CD4-positive, alpha-beta memory T cell (primary cell): ENCODE measurements at regions of chr2 and their contacts with region 1.

Region 1: DNA sequence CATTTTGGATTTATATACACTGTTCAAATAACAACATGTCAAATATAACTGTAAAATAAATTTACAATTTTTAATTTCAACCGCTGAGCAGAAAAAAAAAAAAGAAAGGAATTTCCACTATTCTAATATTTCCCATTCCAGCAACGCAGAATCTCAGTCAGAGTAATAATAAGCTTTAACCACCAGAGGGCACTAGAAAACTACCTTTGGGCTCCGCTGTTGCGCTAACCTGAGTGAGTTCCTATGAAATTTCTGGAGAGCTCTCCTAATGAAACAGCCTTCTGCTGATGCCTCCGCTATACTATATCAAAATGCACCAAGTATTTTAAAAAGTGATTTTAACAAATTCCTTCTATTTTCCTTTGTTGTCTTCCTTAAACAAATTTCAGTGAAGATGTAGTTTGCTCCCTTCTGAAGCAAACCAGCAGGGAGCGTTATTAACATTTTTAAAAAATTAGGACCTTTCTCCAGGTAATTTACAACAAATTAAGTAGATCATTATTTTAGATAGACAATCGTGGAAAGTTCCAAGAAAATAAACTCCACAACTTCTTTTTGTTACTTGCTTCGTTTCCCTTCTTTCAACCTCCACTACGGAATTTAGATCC is 23.0 kb downstream of the ERMN start:
- DNase-seq: peak in 4 of 5 donors; percentile 56 to 63 (median 60)
- H3K4me3 ChIP-seq: no peak overlapping the region
- H3K4me3 Mint-ChIP-seq: no peak overlapping the region
- H3K27ac ChIP-seq: no peak overlapping the region
- H3K27ac Mint-ChIP-seq: no peak overlapping the region
- H3K4me1 ChIP-seq: no peaks in the 10 kb centered on the region
- H3K4me1 Mint-ChIP-seq: peaks cover 0 to 6% (median 2%) of the 10 kb centered on the region in 4 donors
- H3K27me3 ChIP-seq: no peaks in the 10 kb centered on the region
- H3K27me3 Mint-ChIP-seq: peaks cover 1 to 3% of the 10 kb centered on the region in 2 donors

Region 2: GRCh38 chr2:157287160-157287559 is 15.4 kb before region 1 on chr2:
- CTCF ChIA-PET with region 1: interaction called, 21 read pairs
- POLR2A ChIA-PET with region 1: no interaction called
- intact Hi-C with region 1: no loop called
- DNase-seq: no peak
- H3K4me3 ChIP-seq: no peak overlapping the region
- H3K4me3 Mint-ChIP-seq: no peak overlapping the region
- H3K27ac ChIP-seq: no peak overlapping the region
- H3K27ac Mint-ChIP-seq: no peak overlapping the region
- H3K4me1 ChIP-seq: no peaks in the 10 kb centered on the region
- H3K4me1 Mint-ChIP-seq: no peaks in the 10 kb centered on the region
- H3K27me3 ChIP-seq: no peaks in the 10 kb centered on the region
- H3K27me3 Mint-ChIP-seq: peaks cover 3 to 6% of the 10 kb centered on the region in 2 donors

Region 3: DNA sequence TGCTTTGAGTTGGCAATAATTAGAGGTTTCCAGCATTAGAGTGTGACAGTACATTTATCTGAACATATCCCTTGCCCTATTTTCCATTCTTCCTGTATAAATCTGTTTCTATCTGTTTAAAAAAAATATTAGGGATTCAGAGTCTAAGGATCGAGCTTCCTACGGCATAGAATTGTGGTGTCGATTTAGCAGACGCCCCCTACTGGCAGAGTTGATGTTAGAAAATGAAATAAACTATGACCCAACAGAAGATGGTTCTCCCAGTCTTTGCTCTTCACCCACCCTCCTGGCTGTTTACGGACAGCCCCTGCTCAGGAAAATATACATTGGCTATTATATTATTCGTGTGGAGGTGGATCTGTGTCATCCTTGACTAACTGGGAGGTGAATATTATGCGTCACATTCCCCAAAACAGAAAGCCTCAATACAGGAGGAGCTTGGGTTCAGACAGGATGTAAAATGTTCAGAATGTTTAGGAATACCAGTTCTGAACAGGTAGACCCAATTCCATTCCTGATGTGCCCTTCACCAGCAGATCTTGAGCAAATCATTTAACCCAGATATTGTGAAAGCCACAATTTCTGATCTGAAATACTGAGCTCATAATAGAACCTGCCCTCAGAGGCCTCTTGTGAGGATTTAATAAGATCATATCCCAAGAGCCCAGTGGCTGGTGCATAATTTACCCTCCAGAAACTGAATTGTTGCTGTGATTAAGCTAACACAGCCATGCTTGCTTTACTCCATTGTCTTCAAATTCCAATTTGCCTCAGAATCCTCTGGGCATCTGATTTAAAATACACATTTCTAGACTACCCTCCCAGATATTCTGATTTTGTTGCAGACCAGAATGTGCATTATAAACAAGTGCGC is 33.8 kb after region 1 on chr2:
- CTCF ChIA-PET with region 1: interaction called, 136 read pairs
- POLR2A ChIA-PET with region 1: interaction called, 3 read pairs
- intact Hi-C with region 1: no loop called
- DNase-seq: peak in 4 of 5 donors; percentile 40 to 53 (median 48)
- H3K4me3 ChIP-seq: no peak overlapping the region
- H3K4me3 Mint-ChIP-seq: peak overlapping the region; percentile 61 to 83 (median 75)
- H3K27ac ChIP-seq: no peak overlapping the region
- H3K27ac Mint-ChIP-seq: peak overlapping the region; percentile 19 to 87 (median 45)
- H3K4me1 ChIP-seq: peaks cover 43% of the 10 kb centered on the region
- H3K4me1 Mint-ChIP-seq: peaks cover 45 to 60% (median 51%) of the 10 kb centered on the region in 4 donors
- H3K27me3 ChIP-seq: no peaks in the 10 kb centered on the region
- H3K27me3 Mint-ChIP-seq: no peaks in the 10 kb centered on the region

Region 4: GRCh38 chr2:157596992-157597681 is 294.5 kb after region 1 on chr2:
- CTCF ChIA-PET with region 1: interaction called, 142 read pairs
- POLR2A ChIA-PET with region 1: no interaction called
- intact Hi-C with region 1: loop called (anchors 1 kb)
- DNase-seq: peak; percentile 35 to 50 (median 40)
- H3K4me3 ChIP-seq: no peak overlapping the region
- H3K4me3 Mint-ChIP-seq: peak overlapping the region; percentile 44 to 75 (median 56)
- H3K27ac ChIP-seq: no peak overlapping the region
- H3K27ac Mint-ChIP-seq: no peak overlapping the region
- H3K4me1 ChIP-seq: no peaks in the 10 kb centered on the region
- H3K4me1 Mint-ChIP-seq: peaks cover 4 to 10% (median 6%) of the 10 kb centered on the region in 4 donors
- H3K27me3 ChIP-seq: no peaks in the 10 kb centered on the region
- H3K27me3 Mint-ChIP-seq: peaks cover 3 to 4% of the 10 kb centered on the region in 2 donors

Region 5: DNA sequence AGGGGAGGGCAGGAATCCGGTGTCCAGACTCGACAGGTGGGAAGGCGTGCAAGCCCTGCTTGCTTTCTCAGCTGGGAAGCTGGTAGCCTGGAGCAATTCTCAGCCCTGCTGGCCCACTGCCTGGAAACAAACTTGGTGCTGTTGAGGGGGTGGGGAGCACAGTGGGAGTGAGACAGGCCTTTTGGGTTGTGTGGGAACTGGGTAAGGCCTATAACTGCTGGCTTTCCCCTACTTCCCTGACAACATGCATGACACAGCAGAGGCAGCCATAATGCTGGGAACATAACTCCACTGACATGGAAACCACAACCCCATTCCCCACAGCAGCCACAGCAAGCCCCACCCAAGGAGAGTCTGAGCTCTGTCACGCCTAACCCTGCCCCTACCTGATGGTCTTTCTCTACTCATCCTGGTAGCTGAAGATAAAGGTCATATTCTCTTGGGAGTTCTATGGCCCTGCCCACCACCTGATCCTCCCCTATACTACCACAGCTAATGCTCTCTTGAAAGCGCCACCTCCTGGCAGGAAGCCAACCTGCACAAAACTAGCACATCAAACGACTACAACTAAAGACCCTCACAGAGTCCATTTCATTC is 449.0 kb after region 1 on chr2:
- CTCF ChIA-PET with region 1: interaction called, 15 read pairs
- POLR2A ChIA-PET with region 1: no interaction called
- intact Hi-C with region 1: loop called (anchors 2 kb)
- DNase-seq: peak in 1 of 5 donors; percentile 41
- H3K4me3 ChIP-seq: no peak overlapping the region
- H3K4me3 Mint-ChIP-seq: no peak overlapping the region
- H3K27ac ChIP-seq: no peak overlapping the region
- H3K27ac Mint-ChIP-seq: peak overlapping the region in 2 of 7 donors; percentile 13 to 26
- H3K4me1 ChIP-seq: no peaks in the 10 kb centered on the region
- H3K4me1 Mint-ChIP-seq: peaks cover 3 to 29% (median 19%) of the 10 kb centered on the region in 4 donors
- H3K27me3 ChIP-seq: no peaks in the 10 kb centered on the region
- H3K27me3 Mint-ChIP-seq: no peaks in the 10 kb centered on the region

Region 6: GRCh38 chr2:158006961-158007719 is 704.5 kb after region 1 on chr2:
- CTCF ChIA-PET with region 1: interaction called, 48 read pairs
- POLR2A ChIA-PET with region 1: no interaction called
- intact Hi-C with region 1: loop called (anchors 1 kb)
- DNase-seq: no peak
- H3K4me3 ChIP-seq: no peak overlapping the region
- H3K4me3 Mint-ChIP-seq: no peak overlapping the region
- H3K27ac ChIP-seq: no peak overlapping the region
- H3K27ac Mint-ChIP-seq: peak overlapping the region in 1 of 7 donors; percentile 15
- H3K4me1 ChIP-seq: no peaks in the 10 kb centered on the region
- H3K4me1 Mint-ChIP-seq: peaks cover 3 to 6% (median 5%) of the 10 kb centered on the region in 4 donors
- H3K27me3 ChIP-seq: no peaks in the 10 kb centered on the region
- H3K27me3 Mint-ChIP-seq: peaks cover 1 to 6% of the 10 kb centered on the region in 2 donors